ENCODE measurements at regions of chr1 and their contacts with region 1.

Region 1: GRCh38 chr1:2936559-2937515 is 84.4 kb upstream of the ACTRT2 start:
- DNase-seq: no peak
- H3K4me3 ChIP-seq: no peak overlapping the region
- H3K4me3 Mint-ChIP-seq: no peak overlapping the region
- H3K27ac ChIP-seq: no peak overlapping the region
- H3K27ac Mint-ChIP-seq: no peak overlapping the region
- H3K4me1 ChIP-seq: no peaks in the 10 kb centered on the region
- H3K4me1 Mint-ChIP-seq: no peaks in the 10 kb centered on the region
- H3K27me3 ChIP-seq: no peaks in the 10 kb centered on the region
- H3K27me3 Mint-ChIP-seq: peaks cover 0 to 4% (median 2%) of the 10 kb centered on the region in 3 donors
- CTCF ChIP-seq: no peak

Region 2: DNA sequence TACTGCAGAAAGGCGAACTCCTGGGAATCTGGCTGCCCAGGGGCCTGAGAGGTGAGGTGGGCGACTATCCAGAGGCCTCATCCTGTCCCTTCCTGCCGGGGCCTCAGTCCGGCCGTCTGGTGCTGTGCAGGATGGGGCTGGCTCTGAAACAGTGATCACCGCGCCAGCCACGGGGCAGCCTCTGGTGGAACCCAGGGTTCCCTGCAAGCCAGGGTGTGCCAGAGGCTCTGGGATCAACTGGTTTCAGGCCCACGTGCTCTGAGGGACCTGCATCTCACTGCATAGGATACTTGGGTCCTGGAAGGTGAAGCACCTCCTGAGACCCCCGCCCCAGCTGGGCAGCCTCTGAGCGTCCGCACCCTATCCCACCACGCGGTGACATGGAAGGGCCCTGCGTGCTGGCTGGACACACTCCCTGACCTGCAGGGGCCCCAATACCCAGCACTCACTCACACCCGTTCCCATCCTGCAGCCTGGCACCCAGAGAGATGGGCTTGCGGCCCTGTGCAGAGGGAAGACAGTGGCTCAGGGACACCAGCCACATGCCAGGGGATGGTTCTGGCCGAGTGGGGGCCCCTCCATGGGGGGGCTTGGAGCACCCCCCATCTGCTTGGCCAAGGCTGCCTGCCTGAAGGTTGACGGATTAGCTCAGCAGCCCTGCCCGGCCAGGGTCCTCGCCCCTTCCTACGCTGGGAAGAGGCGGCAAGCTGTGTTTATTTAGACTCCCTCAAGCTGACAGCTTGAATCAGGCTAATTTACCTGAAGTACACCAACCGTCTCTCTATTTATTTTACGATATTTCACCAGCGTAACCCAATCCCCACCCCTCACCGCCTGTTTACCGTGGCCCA is 71.0 kb before region 1 on chr1:
- intact Hi-C with region 1: loop called in 1 of 2 experiments (anchors 2 kb)
- DNase-seq: no peak
- H3K4me3 ChIP-seq: no peak overlapping the region
- H3K4me3 Mint-ChIP-seq: no peak overlapping the region
- H3K27ac ChIP-seq: no peak overlapping the region
- H3K27ac Mint-ChIP-seq: no peak overlapping the region
- H3K4me1 ChIP-seq: no peaks in the 10 kb centered on the region
- H3K4me1 Mint-ChIP-seq: no peaks in the 10 kb centered on the region
- H3K27me3 ChIP-seq: no peaks in the 10 kb centered on the region
- H3K27me3 Mint-ChIP-seq: peaks cover 2 to 20% (median 2%) of the 10 kb centered on the region in 3 donors
- CTCF ChIP-seq: no peak

Measured in CD14-positive monocyte (primary cell).